ENCODE measurements at regions of chr1 and their contacts with region 1.

Region 1: GRCh38 chr1:70410604-70411359 is at the start of gene CTH:
- DNase-seq: peak; percentile 94
- H3K4me3 Mint-ChIP-seq: peak within 1 kb of the TSS; percentile 84
- H3K27ac Mint-ChIP-seq: peak within 1 kb of the TSS; percentile 84
- H3K4me1 Mint-ChIP-seq: peaks cover 26% of the 10 kb centered on the region
- H3K27me3 Mint-ChIP-seq: peaks cover 4% of the 10 kb centered on the region
- total RNA-seq, gene CTH: 14.6 to 16.6 TPM

Region 2: DNA sequence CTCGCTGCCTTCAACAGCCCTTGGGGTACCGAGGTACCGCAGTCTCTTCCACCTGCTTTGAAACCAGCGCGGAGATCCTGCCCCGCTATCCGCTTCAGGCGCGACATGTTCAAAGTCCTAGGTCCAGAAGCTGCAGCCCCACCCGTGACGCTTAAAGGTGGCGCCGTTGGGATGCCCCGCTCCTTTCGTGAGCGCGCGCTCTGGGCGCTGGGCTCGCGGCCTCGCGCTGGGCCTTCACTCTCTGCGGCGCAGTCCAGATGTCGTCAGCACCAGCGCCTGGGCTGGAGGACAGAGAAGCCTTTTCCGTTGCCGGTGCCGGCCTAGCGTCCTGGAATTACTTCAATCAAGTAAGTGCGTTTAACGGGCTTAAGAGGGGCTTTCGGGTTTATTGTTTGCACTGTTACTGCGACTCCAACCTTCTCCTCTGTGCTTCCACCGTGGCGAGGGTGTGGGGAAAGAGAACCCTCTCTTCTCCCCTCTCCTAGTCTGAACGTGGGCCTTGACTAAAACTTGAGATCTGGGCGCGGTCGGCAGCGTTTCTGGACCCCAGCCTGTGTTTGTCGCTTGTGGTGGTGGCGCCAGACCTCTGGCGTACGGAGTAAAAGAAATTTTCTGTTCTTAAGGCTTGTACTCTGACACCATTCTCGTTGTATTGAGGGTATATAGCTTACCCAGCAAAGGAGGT is 205.2 kb before region 1 on chr1 and contains the start of gene LRRC40:
- CTCF ChIA-PET with region 1: no interaction called
- POLR2A ChIA-PET with region 1: interaction called, 13 read pairs
- DNase-seq: peak; percentile 97
- H3K4me3 Mint-ChIP-seq: peak within 1 kb of the TSS; percentile 97
- H3K27ac Mint-ChIP-seq: peak within 1 kb of the TSS; percentile 99
- H3K4me1 Mint-ChIP-seq: peaks cover 70% of the 10 kb centered on the region
- H3K27me3 Mint-ChIP-seq: no peaks in the 10 kb centered on the region
- total RNA-seq, gene LRRC40: 19.1 to 20.0 TPM

Region 3: GRCh38 chr1:70221241-70222121 is 189.3 kb before region 1 on chr1 and contains the start of gene SRSF11:
- CTCF ChIA-PET with region 1: no interaction called
- POLR2A ChIA-PET with region 1: interaction called, 11 read pairs
- DNase-seq: peak; percentile 96
- H3K4me3 Mint-ChIP-seq: peak within 1 kb of the TSS; percentile 86
- H3K27ac Mint-ChIP-seq: peak within 1 kb of the TSS; percentile 91
- H3K4me1 Mint-ChIP-seq: peaks cover 49% of the 10 kb centered on the region
- H3K27me3 Mint-ChIP-seq: no peaks in the 10 kb centered on the region
- total RNA-seq, gene SRSF11: 177 to 178 TPM

Region 4: DNA sequence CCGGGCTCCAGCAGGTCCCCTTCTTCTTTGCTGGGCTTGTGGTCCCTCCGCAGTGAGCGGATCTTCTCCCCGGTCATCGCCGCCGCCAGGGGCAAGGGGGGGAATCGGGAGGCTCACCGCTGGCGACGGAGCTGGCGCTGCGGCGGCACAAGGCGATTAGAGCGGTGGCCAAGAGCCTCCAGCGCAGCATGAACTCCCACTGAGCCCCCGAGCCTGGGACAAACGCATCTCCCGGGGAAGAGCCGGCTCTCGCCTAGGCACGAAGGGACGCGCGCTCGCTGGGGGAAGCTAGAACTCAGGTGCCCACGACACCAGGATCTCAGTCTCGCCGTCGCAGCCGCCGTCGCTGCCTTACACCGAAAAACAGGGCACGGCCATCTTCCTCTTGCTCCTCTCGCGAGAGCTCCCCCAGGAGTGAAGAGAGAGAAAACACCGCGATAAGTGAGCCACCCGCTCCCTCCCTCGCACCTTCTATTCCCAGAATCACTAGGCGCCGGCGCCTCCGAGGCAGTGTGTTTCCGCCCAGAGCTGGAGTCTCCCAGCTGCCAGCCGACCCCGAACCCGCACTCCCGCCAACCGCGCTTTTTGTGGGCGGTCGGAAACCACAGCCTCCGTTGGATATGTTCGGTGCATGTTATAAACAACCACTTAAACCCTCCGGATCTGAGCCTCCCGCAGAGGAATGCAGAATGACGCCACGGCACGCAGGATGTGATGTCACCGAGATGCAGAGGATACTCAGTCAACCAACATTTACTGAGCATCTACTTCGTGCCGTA is 56.3 kb before region 1 on chr1 and contains the start of gene ANKRD13C:
- CTCF ChIA-PET with region 1: interaction called, 25 read pairs
- POLR2A ChIA-PET with region 1: interaction called, 182 read pairs
- DNase-seq: peak; percentile 94
- H3K4me3 Mint-ChIP-seq: peak within 1 kb of the TSS; percentile 83
- H3K27ac Mint-ChIP-seq: peak within 1 kb of the TSS; percentile 91
- H3K4me1 Mint-ChIP-seq: peaks cover 42% of the 10 kb centered on the region
- H3K27me3 Mint-ChIP-seq: no peaks in the 10 kb centered on the region
- total RNA-seq, gene ANKRD13C: 24.1 to 24.9 TPM

Region 5: GRCh38 chr1:71080739-71081696 is 670.2 kb after region 1 on chr1 and contains the start of gene ZRANB2:
- CTCF ChIA-PET with region 1: no interaction called
- POLR2A ChIA-PET with region 1: interaction called, 12 read pairs
- DNase-seq: peak; percentile 91
- H3K4me3 Mint-ChIP-seq: peak within 1 kb of the TSS; percentile 99
- H3K27ac Mint-ChIP-seq: peak within 1 kb of the TSS; percentile 99
- H3K4me1 Mint-ChIP-seq: peaks cover 33% of the 10 kb centered on the region
- H3K27me3 Mint-ChIP-seq: peaks cover 12% of the 10 kb centered on the region
- total RNA-seq, gene ZRANB2: 120 to 122 TPM